Right ventricle myocardium inferior (tissue), 1 donor: ENCODE measurements at regions of chr3 and their contacts with region 1.

Region 1: DNA sequence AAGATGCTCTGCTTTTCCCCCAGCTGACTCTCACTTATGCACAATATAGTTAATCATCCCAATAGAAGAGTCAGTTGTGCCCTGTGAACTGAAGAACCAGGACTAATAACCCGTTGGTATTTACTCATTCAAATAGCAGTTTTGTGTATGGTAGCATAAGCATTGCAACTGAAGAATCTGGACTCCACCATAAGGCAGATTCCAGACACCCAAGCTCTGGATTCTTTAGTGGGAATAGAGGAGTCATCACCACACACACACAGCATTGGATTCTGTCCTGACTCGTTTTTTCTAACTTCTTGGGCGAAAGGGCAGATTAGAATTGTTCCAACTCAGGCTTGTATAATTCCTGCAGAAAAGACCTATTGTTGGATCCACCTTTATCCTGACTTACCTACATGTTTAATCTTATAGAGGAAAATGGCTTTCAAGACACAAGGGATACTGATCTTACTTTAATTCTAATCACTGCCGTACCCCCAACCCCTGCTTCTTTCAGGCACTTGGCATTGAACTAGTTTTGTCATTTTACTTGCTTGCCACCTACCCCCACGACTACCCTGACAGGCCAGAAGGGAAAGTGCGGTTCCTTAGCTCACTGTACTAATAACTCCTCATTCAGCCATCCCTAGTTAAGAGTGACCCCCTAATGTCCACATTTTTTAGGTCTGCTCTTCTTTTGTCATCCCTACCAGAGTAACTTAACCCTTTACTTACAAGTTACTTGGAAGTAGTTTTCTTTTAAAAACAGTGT is 42.3 kb downstream of the NKIRAS1 start:
- DNase-seq: no peak
- ATAC-seq: no peak

Region 2: GRCh38 chr3:23575697-23576096 is 298.8 kb before region 1 on chr3:
- intact Hi-C with region 1: no loop called
- DNase-seq: no peak
- ATAC-seq: no peak

Region 3: GRCh38 chr3:23805633-23806533 is 68.7 kb before region 1 on chr3 and contains the start of gene UBE2E1:
- intact Hi-C with region 1: loop called (anchors 5 kb)
- DNase-seq: peak; percentile 91
- ATAC-seq: peak; percentile 81
- total RNA-seq, gene UBE2E1: 75.3 TPM